ENCODE measurements at regions of chr14 and their contacts with region 1.

Region 1: DNA sequence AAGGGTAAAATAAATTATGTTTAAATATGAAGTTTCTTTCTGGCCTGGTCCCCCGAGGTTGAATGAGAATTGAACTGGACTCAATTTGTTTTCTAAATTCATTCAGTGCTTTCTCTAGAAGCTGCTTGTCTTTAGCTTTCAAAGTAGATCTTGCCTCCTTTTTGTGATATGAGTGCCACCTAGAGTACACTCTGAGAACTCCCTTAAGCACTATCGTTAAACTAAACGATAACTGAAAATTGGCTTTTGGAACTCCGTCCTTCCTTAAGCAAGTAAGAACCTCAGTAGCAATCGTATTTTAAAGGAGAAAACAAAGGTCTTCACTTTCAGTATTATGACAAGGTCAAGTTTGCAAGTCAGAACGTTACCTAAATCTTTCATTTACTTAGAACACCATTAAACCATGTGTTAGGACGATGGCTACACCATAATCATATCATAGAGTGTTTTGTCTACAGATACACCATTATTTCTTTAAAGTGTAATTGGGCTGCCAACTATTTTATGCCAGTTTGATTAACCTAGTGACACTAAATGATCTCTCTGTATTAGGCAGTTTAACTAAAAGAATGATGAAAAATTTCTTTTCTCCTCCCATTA is 364.8 kb downstream of the SNAPC1 start:
- DNase-seq: no peak
- H3K4me3 ChIP-seq: no peak overlapping the region
- H3K27ac ChIP-seq: no peak overlapping the region
- H3K4me1 ChIP-seq: no peaks in the 10 kb centered on the region
- H3K27me3 ChIP-seq: no peaks in the 10 kb centered on the region
- CTCF ChIP-seq: peak in 2 of 3 experiments; percentile 50 to 60

Region 2: GRCh38 chr14:61456720-61457119 is 670.3 kb before region 1 on chr14:
- intact Hi-C with region 1: loop called (anchors 10 kb)
- DNase-seq: peak in 1 of 2 donors; percentile 89
- H3K4me3 ChIP-seq: no peak overlapping the region
- H3K27ac ChIP-seq: no peak overlapping the region
- H3K4me1 ChIP-seq: no peaks in the 10 kb centered on the region
- H3K27me3 ChIP-seq: no peaks in the 10 kb centered on the region
- CTCF ChIP-seq: peak; percentile 72 to 86 (median 80)

Region 3: GRCh38 chr14:62053188-62053587 is 73.8 kb before region 1 on chr14:
- intact Hi-C with region 1: no loop called
- DNase-seq: no peak
- H3K4me3 ChIP-seq: no peak overlapping the region
- H3K27ac ChIP-seq: no peak overlapping the region
- H3K4me1 ChIP-seq: no peaks in the 10 kb centered on the region
- H3K27me3 ChIP-seq: no peaks in the 10 kb centered on the region
- CTCF ChIP-seq: no peak